ENCODE measurements at regions of chr1 and their contacts with region 1.

Region 1: DNA sequence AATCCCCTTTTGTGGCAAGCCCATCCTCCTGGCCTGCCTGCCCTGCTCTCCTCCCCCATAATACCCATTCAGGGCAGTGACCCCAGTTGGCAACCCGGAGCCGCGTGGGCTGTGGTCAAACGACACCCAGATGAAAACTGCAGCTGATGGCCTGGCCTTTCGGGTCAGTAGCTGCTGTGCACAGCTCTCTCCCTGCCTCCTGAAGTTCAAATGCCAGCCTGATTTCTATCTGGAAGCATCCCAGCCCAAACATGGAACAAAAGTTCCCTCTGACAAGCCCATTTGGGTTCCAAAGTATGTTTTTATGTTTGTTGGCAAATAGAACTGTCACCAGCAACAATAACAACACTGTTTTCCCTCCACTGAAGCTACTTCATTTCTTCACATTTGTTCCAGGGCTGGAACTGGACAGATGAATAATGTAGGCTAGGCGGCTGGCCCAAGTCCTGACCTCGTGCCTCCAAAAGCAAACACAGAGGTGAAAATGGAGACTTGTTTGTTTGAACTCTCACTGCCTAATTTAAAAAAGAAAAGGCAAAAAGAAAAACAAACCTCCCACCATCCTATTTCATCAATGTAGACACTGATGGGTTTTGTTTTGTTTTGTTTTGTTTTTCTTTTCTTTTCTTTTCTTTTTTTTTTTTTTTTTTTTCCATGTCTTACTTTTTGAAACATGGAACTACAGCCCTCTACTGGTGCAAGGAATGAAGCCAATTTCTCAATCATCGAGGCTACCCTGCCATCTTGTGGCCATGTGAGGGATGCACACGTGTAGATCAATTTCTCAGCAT is 179.0 kb downstream of the ADSS2 start:
- DNase-seq: peak; percentile 95
- H3K4me3 ChIP-seq: no peak overlapping the region
- H3K27ac ChIP-seq: peak overlapping the region; percentile 58
- H3K4me1 ChIP-seq: peaks cover 21% of the 10 kb centered on the region
- H3K27me3 ChIP-seq: no peaks in the 10 kb centered on the region
- CTCF ChIP-seq: peak; percentile 77 to 97
- POLR2A ChIP-seq: no peak

Region 2: DNA sequence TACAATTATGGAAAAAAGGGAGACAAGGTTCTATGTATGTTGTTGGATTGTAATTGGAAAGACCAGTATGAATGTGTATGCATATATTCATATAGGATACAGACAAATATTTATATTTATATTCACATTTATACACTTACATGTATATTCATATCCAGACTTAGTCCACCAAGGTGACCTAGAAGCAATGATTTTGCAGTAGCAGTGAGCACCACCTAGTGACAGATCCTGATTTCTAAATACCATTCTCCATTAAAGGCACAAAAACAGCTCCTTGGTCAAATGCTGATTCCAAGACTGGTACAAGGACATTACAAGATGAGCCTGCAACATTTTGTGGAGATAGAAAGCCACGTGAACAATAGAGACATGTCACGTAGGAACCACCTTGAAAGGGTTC is 863.4 kb before region 1 on chr1:
- CTCF ChIA-PET with region 1: no interaction called
- POLR2A ChIA-PET with region 1: no interaction called
- dilution Hi-C with region 1: no loop called
- intact Hi-C with region 1: loop called (anchors 1 kb)
- DNase-seq: peak; percentile 56
- H3K4me3 ChIP-seq: no peak overlapping the region
- H3K27ac ChIP-seq: no peak overlapping the region
- H3K4me1 ChIP-seq: peaks cover 19% of the 10 kb centered on the region
- H3K27me3 ChIP-seq: no peaks in the 10 kb centered on the region
- CTCF ChIP-seq: peak; percentile 23 to 39
- POLR2A ChIP-seq: no peak

Region 3: GRCh38 chr1:243748706-243749283 is 523.9 kb before region 1 on chr1:
- CTCF ChIA-PET with region 1: interaction called, 4 read pairs
- POLR2A ChIA-PET with region 1: interaction called, 3 read pairs
- dilution Hi-C with region 1: no loop called
- intact Hi-C with region 1: loop called (anchors 1 kb)
- DNase-seq: peak; percentile 79
- H3K4me3 ChIP-seq: no peak overlapping the region
- H3K27ac ChIP-seq: no peak overlapping the region
- H3K4me1 ChIP-seq: peaks cover 4% of the 10 kb centered on the region
- H3K27me3 ChIP-seq: no peaks in the 10 kb centered on the region
- CTCF ChIP-seq: peak; percentile 55 to 58
- POLR2A ChIP-seq: no peak

Region 4: DNA sequence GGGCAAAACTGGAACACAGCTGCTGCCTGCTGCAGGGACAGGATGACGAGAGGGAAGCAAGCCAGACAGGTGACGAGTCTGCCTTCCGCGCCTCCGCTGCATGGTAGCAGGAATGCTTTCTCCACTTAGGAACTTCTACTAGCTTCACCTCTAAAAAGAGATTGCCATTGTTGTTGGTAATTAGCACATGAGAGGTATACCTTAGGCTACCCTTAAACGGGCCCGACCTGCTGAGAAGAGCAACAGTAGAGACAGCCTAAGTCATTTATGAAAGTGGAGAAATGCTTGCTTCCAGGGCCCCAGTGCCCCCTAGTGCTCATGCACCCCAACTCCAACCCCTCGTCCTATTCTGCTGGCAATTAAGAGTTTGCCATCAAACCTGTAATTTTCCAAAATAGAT is 325.7 kb before region 1 on chr1:
- CTCF ChIA-PET with region 1: interaction called, 3 read pairs
- POLR2A ChIA-PET with region 1: no interaction called
- dilution Hi-C with region 1: no loop called
- intact Hi-C with region 1: loop called (anchors 1 kb)
- DNase-seq: peak; percentile 52
- H3K4me3 ChIP-seq: no peak overlapping the region
- H3K27ac ChIP-seq: no peak overlapping the region
- H3K4me1 ChIP-seq: peaks cover 5% of the 10 kb centered on the region
- H3K27me3 ChIP-seq: no peaks in the 10 kb centered on the region
- CTCF ChIP-seq: peak; percentile 60 to 66
- POLR2A ChIP-seq: no peak

Region 5: DNA sequence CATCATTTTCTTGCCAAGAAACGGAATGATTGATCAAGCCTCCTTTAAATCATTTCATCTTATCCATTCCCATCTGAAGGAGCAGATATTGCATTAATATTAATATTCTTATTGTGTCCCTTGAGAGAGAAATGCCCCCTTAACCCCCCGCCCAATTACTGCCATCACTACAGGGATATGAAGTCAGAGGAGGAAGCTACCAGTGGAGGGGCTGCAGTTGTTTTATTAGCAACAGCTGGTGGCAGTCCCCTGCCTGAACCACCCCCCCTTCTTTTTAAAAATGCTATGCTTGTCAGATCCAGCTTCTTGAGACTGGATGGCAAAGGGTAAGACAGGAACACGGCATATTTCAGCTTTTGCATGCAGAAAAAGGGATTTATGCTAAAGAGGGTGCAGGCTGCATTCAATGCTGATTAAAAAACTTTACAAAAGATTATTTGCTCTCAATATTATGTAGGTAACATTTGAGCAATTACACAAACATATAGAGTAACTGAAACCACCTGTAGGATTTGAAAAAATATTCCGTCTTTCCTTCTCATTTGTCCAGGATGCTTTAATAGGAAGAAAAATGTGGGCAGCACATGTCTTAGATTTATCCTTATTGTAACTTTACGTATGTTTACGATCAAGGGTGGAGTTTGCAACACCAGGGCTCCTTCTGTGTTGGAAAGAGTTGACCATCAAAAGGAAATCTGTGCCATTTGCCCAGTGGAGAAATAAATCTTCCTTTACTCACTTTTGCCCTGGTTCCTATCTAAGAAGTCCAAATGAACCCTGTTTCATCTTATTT is 143.9 kb before region 1 on chr1:
- CTCF ChIA-PET with region 1: no interaction called
- POLR2A ChIA-PET with region 1: no interaction called
- dilution Hi-C with region 1: no loop called
- intact Hi-C with region 1: no loop called
- DNase-seq: no peak
- H3K4me3 ChIP-seq: no peak overlapping the region
- H3K27ac ChIP-seq: no peak overlapping the region
- H3K4me1 ChIP-seq: no peaks in the 10 kb centered on the region
- H3K27me3 ChIP-seq: no peaks in the 10 kb centered on the region
- CTCF ChIP-seq: no peak
- POLR2A ChIP-seq: no peak

Region 6: GRCh38 chr1:244163861-244164562 is 108.7 kb before region 1 on chr1:
- CTCF ChIA-PET with region 1: interaction called, 10 read pairs
- POLR2A ChIA-PET with region 1: no interaction called
- dilution Hi-C with region 1: no loop called
- intact Hi-C with region 1: loop called (anchors 1 kb)
- DNase-seq: peak; percentile 95
- H3K4me3 ChIP-seq: peak overlapping the region in 1 of 3 experiments; percentile 18
- H3K27ac ChIP-seq: peak overlapping the region; percentile 99
- H3K4me1 ChIP-seq: peaks cover 32% of the 10 kb centered on the region
- H3K27me3 ChIP-seq: no peaks in the 10 kb centered on the region
- CTCF ChIP-seq: no peak
- POLR2A ChIP-seq: peak; percentile 52

Region 7: GRCh38 chr1:244252211-244252610 is 20.5 kb before region 1 on chr1:
- CTCF ChIA-PET with region 1: no interaction called
- POLR2A ChIA-PET with region 1: no interaction called
- dilution Hi-C with region 1: no loop called
- intact Hi-C with region 1: no loop called
- DNase-seq: no peak
- H3K4me3 ChIP-seq: no peak overlapping the region
- H3K27ac ChIP-seq: no peak overlapping the region
- H3K4me1 ChIP-seq: peaks cover 12% of the 10 kb centered on the region
- H3K27me3 ChIP-seq: no peaks in the 10 kb centered on the region
- CTCF ChIP-seq: no peak
- POLR2A ChIP-seq: no peak

Region 8: GRCh38 chr1:244414543-244414942 is 141.9 kb after region 1 on chr1:
- CTCF ChIA-PET with region 1: interaction called, 18 read pairs
- POLR2A ChIA-PET with region 1: no interaction called
- dilution Hi-C with region 1: no loop called
- intact Hi-C with region 1: no loop called
- DNase-seq: peak; percentile 64
- H3K4me3 ChIP-seq: no peak overlapping the region
- H3K27ac ChIP-seq: no peak overlapping the region
- H3K4me1 ChIP-seq: no peaks in the 10 kb centered on the region
- H3K27me3 ChIP-seq: no peaks in the 10 kb centered on the region
- CTCF ChIP-seq: peak; percentile 17 to 24
- POLR2A ChIP-seq: no peak

Measured in endothelial cell of umbilical vein (primary cell).